Naive thymus-derived CD4-positive, alpha-beta T cell (primary cell): ENCODE measurements at regions of chr21 and their contacts with region 1.

Region 1: DNA sequence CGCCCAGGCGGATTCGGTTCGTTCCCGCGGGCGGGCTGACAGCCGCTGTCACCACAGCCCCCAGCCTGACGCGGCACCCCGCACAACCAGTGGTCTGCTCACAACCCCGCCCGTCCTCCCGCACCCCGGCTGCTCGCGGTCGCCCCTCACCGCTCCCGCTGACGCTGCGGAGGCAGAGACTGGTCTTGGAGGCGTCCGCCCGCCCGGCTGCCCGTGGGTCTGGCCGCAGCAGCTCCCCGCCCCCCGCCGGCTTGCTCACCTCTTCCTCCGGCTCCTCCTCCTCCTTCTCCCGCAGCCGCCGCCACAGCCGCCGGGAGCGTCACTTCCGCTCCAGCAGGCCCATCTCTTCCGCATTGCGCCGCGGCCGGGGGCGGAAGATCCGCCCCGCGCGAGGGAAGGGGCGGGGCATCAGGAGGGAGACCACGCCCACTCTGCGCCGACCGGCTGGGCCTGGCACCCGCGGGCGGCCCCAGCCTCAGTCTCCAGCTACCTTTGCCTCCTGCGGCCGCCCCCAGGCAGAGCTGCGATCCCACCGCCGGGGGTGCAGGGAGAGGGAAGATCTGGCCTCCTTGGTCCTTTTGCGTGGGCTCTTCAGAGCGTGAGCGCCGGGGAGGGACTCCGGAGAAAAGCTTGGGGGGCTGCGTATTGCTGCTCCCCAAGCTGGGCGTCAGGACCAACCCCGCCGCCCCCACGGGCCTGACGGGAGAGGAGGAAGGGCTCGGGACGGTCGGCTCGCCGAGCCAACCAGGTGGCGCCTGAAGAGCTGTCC is at the start of gene SYNJ1:
- DNase-seq: peak; percentile 90 to 97 (median 93)
- ATAC-seq: peak; percentile 95
- H3K4me3 ChIP-seq: peak within 1 kb of the TSS; percentile 78
- H3K4me3 Mint-ChIP-seq: peak within 1 kb of the TSS; percentile 92 to 100 (median 98)
- H3K27ac ChIP-seq: peak within 1 kb of the TSS; percentile 82
- H3K27ac Mint-ChIP-seq: peak within 1 kb of the TSS; percentile 90 to 99 (median 97)
- H3K4me1 ChIP-seq: peaks cover 7 to 42% of the 10 kb centered on the region in 2 donors
- H3K4me1 Mint-ChIP-seq: peaks cover 29 to 78% (median 69%) of the 10 kb centered on the region in 7 donors
- H3K27me3 ChIP-seq: no peaks in the 10 kb centered on the region
- H3K27me3 Mint-ChIP-seq: no peaks in the 10 kb centered on the region
- total RNA-seq, gene SYNJ1: 21.5 to 28.5 (median 22.2) TPM

Region 2: GRCh38 chr21:31731802-31732596 is 995.9 kb before region 1 on chr21 and contains the start of gene SCAF4:
- CTCF ChIA-PET with region 1: no interaction called
- POLR2A ChIA-PET with region 1: no interaction called
- intact Hi-C with region 1: loop called in 1 of 2 experiments (anchors 5 kb)
- DNase-seq: peak; percentile 64 to 86 (median 72)
- ATAC-seq: peak; percentile 95
- H3K4me3 ChIP-seq: peak within 1 kb of the TSS; percentile 80
- H3K4me3 Mint-ChIP-seq: peak within 1 kb of the TSS in 6 of 10 donors; percentile 67 to 94 (median 90)
- H3K27ac ChIP-seq: peak within 1 kb of the TSS; percentile 95
- H3K27ac Mint-ChIP-seq: peak within 1 kb of the TSS; percentile 32 to 96 (median 83)
- H3K4me1 ChIP-seq: peaks cover 24 to 39% of the 10 kb centered on the region in 2 donors
- H3K4me1 Mint-ChIP-seq: peaks cover 13 to 19% (median 15%) of the 10 kb centered on the region in 7 donors
- H3K27me3 ChIP-seq: no peaks in the 10 kb centered on the region
- H3K27me3 Mint-ChIP-seq: peaks cover 0 to 2% (median 0%) of the 10 kb centered on the region in 5 donors
- total RNA-seq, gene SCAF4: 54.8 to 69.7 (median 64.7) TPM

Region 3: GRCh38 chr21:32392880-32393676 is 334.8 kb before region 1 on chr21 and contains the start of gene URB1:
- CTCF ChIA-PET with region 1: no interaction called
- POLR2A ChIA-PET with region 1: no interaction called
- intact Hi-C with region 1: loop called (anchors 1 to 5 kb)
- DNase-seq: peak; percentile 88 to 99 (median 94)
- ATAC-seq: peak; percentile 99
- H3K4me3 ChIP-seq: peak within 1 kb of the TSS; percentile 85
- H3K4me3 Mint-ChIP-seq: peak within 1 kb of the TSS; percentile 81 to 92 (median 86)
- H3K27ac ChIP-seq: peak within 1 kb of the TSS; percentile 70
- H3K27ac Mint-ChIP-seq: peak within 1 kb of the TSS; percentile 46 to 90 (median 71)
- H3K4me1 ChIP-seq: peaks cover 8 to 12% of the 10 kb centered on the region in 2 donors
- H3K4me1 Mint-ChIP-seq: peaks cover 34 to 52% (median 43%) of the 10 kb centered on the region in 7 donors
- H3K27me3 ChIP-seq: no peaks in the 10 kb centered on the region
- H3K27me3 Mint-ChIP-seq: peaks cover 2 to 20% (median 3%) of the 10 kb centered on the region in 5 donors
- total RNA-seq, gene URB1: 14.5 to 20.6 (median 17.9) TPM

Region 4: GRCh38 chr21:32612075-32612998 is 115.5 kb before region 1 on chr21 and contains the start of gene CFAP298:
- CTCF ChIA-PET with region 1: interaction called, 3 read pairs
- POLR2A ChIA-PET with region 1: interaction called, 5 read pairs
- intact Hi-C with region 1: loop called (anchors 1 kb)
- DNase-seq: peak; percentile 78 to 93 (median 89)
- ATAC-seq: peak; percentile 97
- H3K4me3 ChIP-seq: peak within 1 kb of the TSS; percentile 100
- H3K4me3 Mint-ChIP-seq: peak within 1 kb of the TSS; percentile 95 to 98 (median 97)
- H3K27ac ChIP-seq: peak within 1 kb of the TSS; percentile 87
- H3K27ac Mint-ChIP-seq: peak within 1 kb of the TSS; percentile 90 to 98 (median 97)
- H3K4me1 ChIP-seq: peaks cover 12% of the 10 kb centered on the region in 2 donors
- H3K4me1 Mint-ChIP-seq: peaks cover 0 to 34% (median 12%) of the 10 kb centered on the region in 7 donors
- H3K27me3 ChIP-seq: no peaks in the 10 kb centered on the region
- H3K27me3 Mint-ChIP-seq: peaks cover 0 to 15% (median 0%) of the 10 kb centered on the region in 5 donors
- total RNA-seq, gene CFAP298: 16.8 to 34.5 (median 31.3) TPM

Region 5: DNA sequence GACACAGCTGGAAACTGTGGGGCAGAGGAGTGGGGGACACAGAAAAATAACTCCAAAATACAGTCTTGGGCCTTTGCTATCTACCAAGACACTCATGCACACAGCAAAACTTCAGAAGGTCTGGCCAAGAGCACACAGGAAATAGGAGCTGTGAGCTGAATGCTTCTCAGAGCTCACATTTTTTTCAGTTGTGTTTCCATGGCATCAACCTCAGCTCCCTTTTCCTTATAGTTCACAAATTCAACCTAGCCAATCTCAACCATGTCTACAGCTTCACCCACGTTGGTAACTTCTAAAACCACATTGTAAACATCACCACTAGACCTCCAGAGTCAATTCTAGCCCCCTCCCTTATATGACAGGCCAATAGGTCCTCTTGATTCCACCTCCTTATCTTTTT is 19.5 kb after region 1 on chr21:
- CTCF ChIA-PET with region 1: no interaction called
- POLR2A ChIA-PET with region 1: interaction called, 3 read pairs
- intact Hi-C with region 1: loop called in 1 of 2 experiments (anchors 2 kb)
- DNase-seq: peak in 2 of 9 donors; percentile 6 to 21
- ATAC-seq: peak; percentile 24
- H3K4me3 ChIP-seq: no peak overlapping the region
- H3K4me3 Mint-ChIP-seq: peak overlapping the region in 7 of 10 donors; percentile 8 to 66 (median 35)
- H3K27ac ChIP-seq: peak overlapping the region; percentile 11
- H3K27ac Mint-ChIP-seq: peak overlapping the region in 8 of 9 donors; percentile 31 to 83 (median 70)
- H3K4me1 ChIP-seq: peaks cover 0 to 7% of the 10 kb centered on the region in 2 donors
- H3K4me1 Mint-ChIP-seq: peaks cover 7 to 32% (median 26%) of the 10 kb centered on the region in 7 donors
- H3K27me3 ChIP-seq: no peaks in the 10 kb centered on the region
- H3K27me3 Mint-ChIP-seq: no peaks in the 10 kb centered on the region

Region 6: GRCh38 chr21:33479679-33480480 is 752.0 kb after region 1 on chr21 and contains the start of gene TMEM50B:
- CTCF ChIA-PET with region 1: no interaction called
- POLR2A ChIA-PET with region 1: interaction called, 4 read pairs
- intact Hi-C with region 1: loop called in 1 of 2 experiments (anchors 2 kb)
- DNase-seq: peak; percentile 85 to 96 (median 94)
- ATAC-seq: peak; percentile 95
- H3K4me3 ChIP-seq: peak within 1 kb of the TSS; percentile 70
- H3K4me3 Mint-ChIP-seq: peak within 1 kb of the TSS; percentile 87 to 96 (median 96)
- H3K27ac ChIP-seq: peak within 1 kb of the TSS; percentile 89
- H3K27ac Mint-ChIP-seq: peak within 1 kb of the TSS; percentile 90 to 99 (median 95)
- H3K4me1 ChIP-seq: peaks cover 0 to 5% of the 10 kb centered on the region in 2 donors
- H3K4me1 Mint-ChIP-seq: peaks cover 7 to 33% (median 21%) of the 10 kb centered on the region in 7 donors
- H3K27me3 ChIP-seq: no peaks in the 10 kb centered on the region
- H3K27me3 Mint-ChIP-seq: peaks cover 0 to 15% (median 0%) of the 10 kb centered on the region in 5 donors
- total RNA-seq, gene TMEM50B: 38.3 to 108 (median 61.7) TPM

Region 7: GRCh38 chr21:33588485-33589335 is 860.8 kb after region 1 on chr21 and contains the start of gene DONSON:
- CTCF ChIA-PET with region 1: no interaction called
- POLR2A ChIA-PET with region 1: no interaction called
- intact Hi-C with region 1: loop called in 1 of 2 experiments (anchors 1 kb)
- DNase-seq: peak; percentile 76 to 97 (median 89)
- ATAC-seq: peak; percentile 98
- H3K4me3 ChIP-seq: peak within 1 kb of the TSS; percentile 63
- H3K4me3 Mint-ChIP-seq: peak within 1 kb of the TSS; percentile 90 to 96 (median 94)
- H3K27ac ChIP-seq: peak within 1 kb of the TSS; percentile 89
- H3K27ac Mint-ChIP-seq: peak within 1 kb of the TSS; percentile 34 to 96 (median 89)
- H3K4me1 ChIP-seq: peaks cover 5% of the 10 kb centered on the region in 2 donors
- H3K4me1 Mint-ChIP-seq: peaks cover 0 to 31% (median 20%) of the 10 kb centered on the region in 7 donors
- H3K27me3 ChIP-seq: no peaks in the 10 kb centered on the region
- H3K27me3 Mint-ChIP-seq: peaks cover 0 to 1% (median 0%) of the 10 kb centered on the region in 5 donors
- total RNA-seq, gene DONSON: 8.9 to 30.8 (median 10.7) TPM